Sigmoid colon (tissue), 7 donors: ENCODE measurements at regions of chr12 and their contacts with region 1.

Region 1: DNA sequence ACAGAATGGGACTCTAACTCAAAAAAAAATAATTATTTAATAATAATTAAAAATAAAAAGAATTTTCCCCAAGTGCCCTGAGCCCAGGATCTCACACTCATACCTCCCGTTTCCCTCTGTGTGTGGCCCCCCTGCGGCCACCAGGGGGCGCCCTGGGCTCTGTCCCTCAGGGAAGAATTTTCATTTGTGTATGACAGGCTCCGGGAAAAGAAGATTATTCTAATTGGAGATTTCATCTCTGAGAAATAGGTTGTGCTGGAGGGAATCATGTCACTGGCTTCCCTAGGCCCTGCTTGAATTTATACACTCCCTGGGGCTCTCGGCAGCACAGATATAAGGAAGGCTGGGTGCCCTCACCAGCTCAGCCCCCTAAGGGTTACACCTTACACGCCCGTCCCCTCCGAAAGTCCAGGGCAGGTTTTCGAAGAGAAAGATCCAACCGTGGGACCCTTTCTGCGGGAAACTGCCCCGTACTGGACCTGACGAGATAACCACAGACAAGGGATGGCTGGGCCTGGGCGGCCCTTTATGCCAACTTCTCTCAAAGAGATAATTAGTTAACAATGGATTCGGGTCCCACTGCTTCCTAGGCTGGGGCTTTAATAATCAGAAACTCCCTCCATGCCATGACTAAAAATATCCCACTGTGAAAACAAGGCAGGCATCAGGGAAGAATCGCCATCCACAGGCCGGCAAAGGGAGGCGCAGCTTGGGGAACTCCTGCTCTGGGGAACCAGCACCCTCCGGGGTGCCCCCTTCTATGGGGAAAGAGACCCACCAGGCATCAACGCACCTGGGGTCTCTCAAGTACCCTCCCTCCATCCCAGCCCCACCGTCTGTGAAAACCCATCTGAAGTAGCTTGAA is 80.7 kb downstream of the KDM2B start:
- DNase-seq: peak; percentile 87
- H3K4me3 ChIP-seq: peak overlapping the region in 3 of 4 donors; percentile 21 to 39 (median 37)
- H3K27ac ChIP-seq: peak overlapping the region; percentile 73 to 78 (median 74)
- H3K4me1 ChIP-seq: peaks cover 0 to 9% (median 7%) of the 10 kb centered on the region in 4 donors
- H3K27me3 ChIP-seq: no peaks in the 10 kb centered on the region
- CTCF ChIP-seq: peak; percentile 68 to 96 (median 80)
- EP300 ChIP-seq: no peak
- POLR2A ChIP-seq: no peak

Region 2: DNA sequence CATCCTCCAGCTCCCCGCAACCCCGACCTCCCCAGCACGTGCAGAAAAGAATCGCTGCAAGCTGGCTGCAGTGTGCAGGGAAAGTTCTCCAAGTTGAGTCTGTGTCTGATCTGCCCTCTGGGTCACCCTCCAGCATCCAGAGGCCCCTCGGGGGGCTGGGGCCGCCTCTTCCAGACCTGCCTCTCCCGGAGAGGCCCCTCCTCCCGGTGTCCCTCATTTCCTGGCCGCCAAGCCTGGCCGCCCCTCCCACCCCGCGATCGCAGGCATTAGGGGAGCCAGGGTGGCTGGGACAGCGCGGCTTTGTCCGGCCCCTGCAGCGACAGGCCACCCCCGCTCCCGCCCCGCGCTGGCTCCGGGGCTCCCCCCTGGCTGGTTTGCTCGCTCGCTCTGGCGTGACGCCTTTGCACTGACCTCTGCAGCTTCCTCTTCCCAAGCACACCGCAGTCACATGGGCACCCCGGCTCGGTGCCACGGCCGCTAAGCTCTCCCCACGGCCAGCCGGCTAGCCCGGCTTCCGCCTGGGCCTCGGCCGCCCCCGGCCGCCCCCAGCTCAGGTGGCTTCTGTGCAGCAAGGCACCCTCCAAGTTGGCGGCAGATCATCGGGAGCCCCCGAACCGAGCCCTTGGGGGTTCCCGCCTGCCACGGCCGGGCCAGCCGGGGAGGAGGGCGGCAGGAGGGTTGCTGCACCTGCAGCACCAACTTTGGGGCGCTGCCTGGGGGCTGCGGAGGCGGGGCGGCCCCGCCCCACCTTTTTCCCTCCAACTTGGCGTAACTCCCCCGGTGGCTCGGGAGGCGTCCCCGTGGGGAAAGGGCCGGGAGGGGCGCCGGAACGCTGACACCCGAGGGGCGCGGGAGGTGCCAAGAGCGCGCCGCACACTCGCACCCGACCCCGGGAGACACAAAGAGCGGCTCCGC is 37.0 kb after region 1 on chr12:
- intact Hi-C with region 1: loop called (anchors 5 kb)
- DNase-seq: peak; percentile 95
- H3K4me3 ChIP-seq: peak overlapping the region; percentile 57 to 82 (median 72)
- H3K27ac ChIP-seq: peak overlapping the region; percentile 87 to 96 (median 94)
- H3K4me1 ChIP-seq: peaks cover 0 to 39% (median 33%) of the 10 kb centered on the region in 4 donors
- H3K27me3 ChIP-seq: no peaks in the 10 kb centered on the region
- CTCF ChIP-seq: no peak
- EP300 ChIP-seq: no peak
- POLR2A ChIP-seq: peak; percentile 41 to 49

Region 3: DNA sequence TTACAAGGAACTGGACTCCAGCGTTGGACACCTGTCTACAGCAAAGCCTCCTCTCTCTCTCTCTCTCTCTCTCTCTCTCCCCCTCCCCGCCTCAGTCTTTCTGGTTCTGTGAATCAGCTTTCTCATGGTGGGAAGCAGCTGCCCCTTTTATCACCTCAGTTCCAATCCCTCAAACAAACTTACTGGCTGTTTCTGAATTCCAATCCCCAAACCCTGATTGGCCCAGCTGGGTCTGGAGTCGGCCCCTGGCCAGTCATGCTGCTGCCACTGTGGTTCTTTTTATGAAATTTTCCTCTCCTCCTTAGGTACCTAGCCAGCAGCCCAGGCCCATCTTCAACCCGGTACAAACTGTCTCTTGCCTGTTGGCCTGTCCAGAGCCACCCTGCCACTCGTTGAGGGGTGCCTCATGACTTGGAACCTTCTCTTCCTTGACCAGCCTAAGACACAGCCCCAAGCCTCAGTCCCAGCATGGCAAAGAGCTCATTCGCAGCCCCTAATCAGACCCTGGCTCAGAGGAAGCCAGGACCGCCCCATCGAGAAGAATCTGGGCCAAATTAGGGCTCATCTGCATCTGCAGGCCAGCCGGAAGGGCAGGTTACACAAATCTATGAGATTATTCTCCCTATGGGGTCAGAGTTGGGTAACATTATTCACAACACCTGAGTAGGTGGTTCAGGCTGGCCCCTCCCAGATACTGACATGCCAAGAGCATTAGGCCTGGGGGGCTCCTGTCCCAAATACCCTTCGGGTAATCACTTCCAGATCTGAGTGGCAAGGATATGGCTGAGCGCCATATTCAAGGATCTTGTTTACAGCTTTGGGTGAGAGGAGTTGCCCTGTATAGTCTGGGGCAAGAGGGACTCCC is 178.8 kb after region 1 on chr12:
- intact Hi-C with region 1: loop called (anchors 2 kb)
- DNase-seq: no peak
- H3K4me3 ChIP-seq: no peak overlapping the region
- H3K27ac ChIP-seq: no peak overlapping the region
- H3K4me1 ChIP-seq: no peaks in the 10 kb centered on the region
- H3K27me3 ChIP-seq: no peaks in the 10 kb centered on the region
- CTCF ChIP-seq: no peak
- EP300 ChIP-seq: no peak
- POLR2A ChIP-seq: no peak